WTC11 (cell line): ENCODE measurements at regions of chr6 and their contacts with region 1.

Region 1: GRCh38 chr6:134174672-134175198 is 122.3 kb upstream of the SLC2A12 start:
- DNase-seq: peak; percentile 91
- ATAC-seq: peak; percentile 66
- H3K4me3 Mint-ChIP-seq: peak overlapping the region; percentile 94
- H3K27ac Mint-ChIP-seq: peak overlapping the region; percentile 86
- H3K4me1 Mint-ChIP-seq: peaks cover 40% of the 10 kb centered on the region
- H3K27me3 Mint-ChIP-seq: peaks cover 21% of the 10 kb centered on the region
- CTCF ChIP-seq: no peak

Region 2: DNA sequence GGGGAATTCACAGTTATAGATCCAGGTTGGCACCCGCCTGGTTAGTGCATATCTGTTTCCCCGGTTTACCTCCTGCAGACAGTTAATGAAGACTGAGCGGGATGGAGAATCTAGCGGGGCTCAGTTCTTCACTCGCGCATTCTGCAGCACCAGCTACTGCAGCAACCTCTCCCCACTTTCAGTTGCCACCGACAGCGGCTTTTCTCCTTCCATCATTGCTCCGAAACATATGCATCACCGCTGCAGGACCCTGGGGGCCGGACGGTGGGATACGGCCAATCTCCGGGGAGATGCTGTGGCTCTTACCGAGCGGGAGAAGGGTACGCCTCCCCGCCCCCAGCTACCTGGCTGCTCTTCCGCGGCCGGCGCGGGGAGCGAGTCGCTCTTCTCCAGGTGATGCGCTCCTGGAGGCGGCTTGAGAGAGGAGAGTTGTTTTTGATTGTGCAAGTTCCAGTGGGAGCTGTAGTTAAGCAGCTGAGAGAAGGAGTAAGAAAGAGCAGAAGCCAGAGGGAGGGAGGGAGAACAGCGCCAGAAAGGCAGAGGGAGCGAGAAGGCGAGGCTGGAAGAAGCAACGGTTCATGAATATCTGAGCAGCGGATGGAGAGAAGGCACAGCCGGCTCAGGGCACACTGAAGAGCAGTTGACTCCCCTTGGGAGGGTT is 142.9 kb after region 1 on chr6 and contains the start of gene SGK1:
- CTCF ChIA-PET with region 1: interaction called, 10 read pairs
- POLR2A ChIA-PET with region 1: no interaction called
- DNase-seq: peak; percentile 62
- ATAC-seq: peak; percentile 92
- H3K4me3 Mint-ChIP-seq: peak within 1 kb of the TSS; percentile 83
- H3K27ac Mint-ChIP-seq: no peak within 1 kb of the TSS
- H3K4me1 Mint-ChIP-seq: peaks cover 50% of the 10 kb centered on the region
- H3K27me3 Mint-ChIP-seq: peaks cover 58% of the 10 kb centered on the region
- CTCF ChIP-seq: no peak
- total RNA-seq, gene SGK1: 23.2 to 29.7 TPM (median 29.3 TPM) in 3 replicates